ENCODE measurements at regions of chr7 and their contacts with region 1.

Region 1: GRCh38 chr7:134220236-134220635 is 93.1 kb downstream of the LRGUK start:
- DNase-seq: no peak
- ATAC-seq: no peak
- H3K4me3 ChIP-seq: no peak overlapping the region
- H3K27ac ChIP-seq: no peak overlapping the region
- H3K4me1 ChIP-seq: no peaks in the 10 kb centered on the region
- H3K27me3 ChIP-seq: peaks cover 1% of the 10 kb centered on the region; the same call in 1 of the 2 replicates
- CTCF ChIP-seq: no peak
- POLR2A ChIP-seq: no peak
- RAD21 ChIP-seq: no peak

Region 2: GRCh38 chr7:133478591-133479135 is 741.6 kb before region 1 on chr7:
- CTCF ChIA-PET with region 1: no interaction called
- POLR2A ChIA-PET with region 1: no interaction called
- dilution Hi-C with region 1: no loop called
- in situ Hi-C with region 1: no loop called
- intact Hi-C with region 1: no loop called
- DNase-seq: no peak
- ATAC-seq: no peak
- H3K4me3 ChIP-seq: no peak overlapping the region
- H3K27ac ChIP-seq: no peak overlapping the region
- H3K4me1 ChIP-seq: no peaks in the 10 kb centered on the region
- H3K27me3 ChIP-seq: no peaks in the 10 kb centered on the region
- CTCF ChIP-seq: no peak
- POLR2A ChIP-seq: no peak
- RAD21 ChIP-seq: no peak

Region 3: DNA sequence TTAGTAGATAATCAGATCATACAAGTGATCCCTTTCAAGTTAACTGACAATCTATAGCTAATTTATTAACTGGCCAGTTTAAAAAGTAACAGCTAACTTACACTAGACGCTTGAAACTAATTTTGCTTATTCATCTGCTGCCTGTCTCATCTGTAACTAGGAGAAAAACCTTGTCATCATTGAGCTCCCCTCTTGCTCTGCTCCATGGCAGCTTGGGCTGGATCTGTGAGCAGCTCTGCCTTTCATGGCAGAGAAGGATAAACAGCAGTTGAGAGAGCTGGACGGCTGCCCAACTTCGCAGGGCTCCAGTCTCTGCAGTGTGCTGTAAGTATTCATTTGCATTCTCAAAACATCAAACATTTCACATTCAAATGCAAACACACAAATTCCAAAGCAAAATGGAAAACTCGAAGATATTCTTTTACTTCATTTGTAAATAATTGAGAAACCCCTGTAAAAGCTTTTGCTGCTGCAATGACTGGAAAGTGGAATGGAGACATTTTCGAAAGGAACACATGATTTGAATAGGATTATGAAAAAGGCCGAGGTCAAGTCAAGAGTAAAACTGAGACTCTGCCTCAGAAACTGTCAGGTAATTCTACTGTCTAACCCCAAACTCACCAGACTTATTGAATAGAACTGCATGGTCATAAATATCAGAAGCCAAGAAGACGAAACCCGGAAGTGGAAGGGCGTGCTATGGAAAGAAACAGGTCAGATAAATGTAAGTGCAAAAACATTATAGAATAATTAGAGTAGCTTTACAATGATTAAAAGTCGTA is 78.9 kb after region 1 on chr7:
- CTCF ChIA-PET with region 1: no interaction called
- POLR2A ChIA-PET with region 1: no interaction called
- dilution Hi-C with region 1: no loop called
- in situ Hi-C with region 1: no loop called
- intact Hi-C with region 1: loop called (anchors 5 kb)
- DNase-seq: peak; percentile 78
- ATAC-seq: peak; percentile 99
- H3K4me3 ChIP-seq: no peak overlapping the region
- H3K27ac ChIP-seq: no peak overlapping the region; the same call in 1 of the 2 replicates
- H3K4me1 ChIP-seq: peaks cover 4% of the 10 kb centered on the region; the same call in 1 of the 2 replicates
- H3K27me3 ChIP-seq: no peaks in the 10 kb centered on the region
- CTCF ChIP-seq: no peak
- POLR2A ChIP-seq: no peak
- RAD21 ChIP-seq: no peak

Measured in IMR-90 (cell line).